ENCODE measurements at regions of chr12 and their contacts with region 1.

Region 1: DNA sequence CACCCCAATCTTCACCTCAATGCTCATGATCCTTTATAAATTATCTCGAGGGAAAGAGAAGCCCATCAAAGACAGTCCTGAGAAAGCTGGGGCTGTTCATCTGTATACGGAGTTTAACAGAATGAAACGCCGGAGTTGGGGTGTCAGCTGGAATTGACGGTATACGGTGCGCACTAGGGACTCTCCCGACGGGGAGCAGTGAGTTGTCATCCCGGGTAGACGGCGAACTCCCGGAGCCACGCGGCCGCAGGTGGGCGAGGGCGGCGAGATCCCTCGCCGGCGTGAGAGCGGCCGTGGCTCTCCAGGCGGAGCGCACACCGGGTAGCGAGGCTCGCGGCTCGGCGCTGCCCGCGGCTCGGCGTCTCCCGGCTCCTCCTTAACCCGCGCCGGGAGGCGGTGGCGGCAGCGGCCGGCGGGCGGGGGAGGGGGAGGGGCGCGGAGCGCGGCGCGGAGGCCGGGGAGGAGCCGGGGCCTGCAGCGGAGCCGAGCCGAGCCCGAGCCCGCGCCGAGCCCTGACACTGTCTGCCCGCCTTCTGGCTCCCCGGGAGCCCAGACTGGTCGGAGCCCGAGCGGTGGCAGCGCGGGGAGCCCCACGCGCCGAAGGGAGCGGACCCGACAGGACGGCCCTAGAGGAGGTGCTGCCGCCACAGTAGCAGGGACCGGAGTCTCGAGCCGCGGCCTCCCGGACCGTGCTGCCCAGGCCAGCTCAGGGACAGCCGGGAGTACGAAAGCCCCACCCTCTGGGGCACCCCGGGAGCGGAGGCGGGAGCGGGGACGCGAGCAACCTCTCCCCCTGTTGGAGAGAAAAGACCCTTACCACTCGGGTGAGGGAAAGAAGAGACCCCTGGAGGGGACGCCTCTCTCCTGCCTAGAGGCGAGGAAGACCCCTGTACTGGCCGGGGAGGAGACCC is at the start of gene FOXJ2:
- DNase-seq: peak; percentile 72
- H3K4me3 Mint-ChIP-seq: peak within 1 kb of the TSS; percentile 78
- H3K27ac Mint-ChIP-seq: peak within 1 kb of the TSS; percentile 89
- H3K4me1 Mint-ChIP-seq: peaks cover 36% of the 10 kb centered on the region
- H3K27me3 Mint-ChIP-seq: no peaks in the 10 kb centered on the region
- CTCF ChIP-seq: no peak
- total RNA-seq, gene FOXJ2: 19.7 and 21.1 TPM in 2 replicates

Region 2: GRCh38 chr12:7844116-7844515 is 188.4 kb before region 1 on chr12:
- CTCF ChIA-PET with region 1: no interaction called
- POLR2A ChIA-PET with region 1: no interaction called
- intact Hi-C with region 1: no loop called
- DNase-seq: no peak
- H3K4me3 Mint-ChIP-seq: no peak overlapping the region
- H3K27ac Mint-ChIP-seq: no peak overlapping the region
- H3K4me1 Mint-ChIP-seq: no peaks in the 10 kb centered on the region
- H3K27me3 Mint-ChIP-seq: peaks cover 19% of the 10 kb centered on the region
- CTCF ChIP-seq: no peak

Region 3: GRCh38 chr12:7869127-7869526 is 163.4 kb before region 1 on chr12:
- CTCF ChIA-PET with region 1: no interaction called
- POLR2A ChIA-PET with region 1: no interaction called
- intact Hi-C with region 1: no loop called
- DNase-seq: peak; percentile 48
- H3K4me3 Mint-ChIP-seq: no peak overlapping the region
- H3K27ac Mint-ChIP-seq: no peak overlapping the region
- H3K4me1 Mint-ChIP-seq: peaks cover 5% of the 10 kb centered on the region
- H3K27me3 Mint-ChIP-seq: no peaks in the 10 kb centered on the region
- CTCF ChIP-seq: no peak

Region 4: DNA sequence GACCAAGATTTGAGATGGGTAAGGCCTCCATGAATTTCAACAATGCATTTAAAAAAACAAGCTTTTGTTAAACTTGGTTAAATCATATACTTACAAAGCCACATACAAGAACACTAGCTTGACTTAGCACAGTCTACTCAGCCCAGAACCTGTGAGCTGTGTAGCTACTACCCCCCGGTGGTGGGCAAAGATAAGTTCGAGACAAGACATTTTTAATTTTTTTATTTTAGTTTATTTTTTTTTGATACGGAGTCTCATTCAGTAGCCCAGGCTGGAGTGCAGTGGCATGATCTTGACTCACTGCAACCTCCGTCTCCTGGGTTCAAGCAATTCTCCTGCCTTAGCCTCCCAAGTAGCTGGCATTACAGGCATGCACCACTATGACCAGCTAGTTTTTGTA is 45.9 kb after region 1 on chr12:
- CTCF ChIA-PET with region 1: interaction called, 17 read pairs
- POLR2A ChIA-PET with region 1: interaction called, 18 read pairs
- intact Hi-C with region 1: loop called (anchors 5 kb)
- DNase-seq: peak; percentile 57
- H3K4me3 Mint-ChIP-seq: no peak overlapping the region
- H3K27ac Mint-ChIP-seq: no peak overlapping the region
- H3K4me1 Mint-ChIP-seq: peaks cover 24% of the 10 kb centered on the region
- H3K27me3 Mint-ChIP-seq: no peaks in the 10 kb centered on the region
- CTCF ChIP-seq: peak; percentile 45